ENCODE measurements at regions of chr2 and their contacts with region 1.

Region 1: DNA sequence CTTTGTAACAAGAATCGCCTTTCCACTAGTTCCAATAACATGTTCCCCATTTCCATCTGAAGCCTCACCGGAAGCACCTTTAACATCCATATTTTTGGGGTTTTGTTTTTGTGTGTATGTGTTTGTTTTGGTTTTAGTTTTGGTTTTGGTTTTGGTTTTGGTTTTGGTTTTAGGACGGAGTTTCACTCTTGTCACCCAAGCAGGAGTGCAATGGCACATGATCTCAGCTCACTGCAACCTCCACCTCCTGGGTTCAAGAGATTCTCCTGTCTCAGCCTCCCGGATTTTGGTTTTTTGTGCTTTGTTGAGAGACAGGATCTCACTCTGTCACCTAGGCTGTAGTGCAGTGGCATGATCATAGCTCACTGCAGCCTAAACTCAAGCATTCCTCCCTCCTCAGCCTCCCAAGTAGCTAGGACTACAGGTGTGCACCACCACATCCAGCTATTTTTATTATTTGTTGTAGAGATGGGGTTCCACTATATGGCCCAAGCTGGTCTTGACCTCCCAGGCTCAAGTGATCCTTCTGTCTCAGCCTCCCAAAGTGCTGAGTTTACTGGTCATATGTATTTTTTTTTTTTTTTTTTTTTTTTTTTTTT is 36.3 kb downstream of the TGOLN2 start:
- DNase-seq: no peak
- H3K4me3 ChIP-seq: no peak overlapping the region
- H3K27ac ChIP-seq: peak overlapping the region in 1 of 5 donors; percentile 38
- H3K4me1 ChIP-seq: peaks cover 0 to 11% (median 0%) of the 10 kb centered on the region in 4 donors
- H3K27me3 ChIP-seq: no peaks in the 10 kb centered on the region
- CTCF ChIP-seq: no peak
- EP300 ChIP-seq: no peak
- POLR2A ChIP-seq: no peak

Region 2: GRCh38 chr2:85066874-85067351 is 224.6 kb before region 1 on chr2:
- intact Hi-C with region 1: loop called (anchors 5 kb)
- DNase-seq: peak; percentile 67 to 90
- H3K4me3 ChIP-seq: peak overlapping the region; percentile 16 to 36 (median 28)
- H3K27ac ChIP-seq: peak overlapping the region in 1 of 5 donors; percentile 2
- H3K4me1 ChIP-seq: peaks cover 0 to 11% (median 6%) of the 10 kb centered on the region in 4 donors
- H3K27me3 ChIP-seq: peaks cover 0 to 4% (median 0%) of the 10 kb centered on the region in 3 donors
- CTCF ChIP-seq: peak in 5 of 7 experiments; percentile 63 to 79 (median 66)
- EP300 ChIP-seq: no peak
- POLR2A ChIP-seq: no peak

Region 3: GRCh38 chr2:85134889-85135659 is 156.4 kb before region 1 on chr2:
- intact Hi-C with region 1: loop called (anchors 5 kb)
- DNase-seq: peak in 1 of 2 donors; percentile 43
- H3K4me3 ChIP-seq: peak overlapping the region; percentile 48 to 86 (median 74)
- H3K27ac ChIP-seq: peak overlapping the region in 3 of 5 donors; percentile 73 to 85 (median 84)
- H3K4me1 ChIP-seq: peaks cover 10 to 70% (median 43%) of the 10 kb centered on the region in 4 donors
- H3K27me3 ChIP-seq: peaks cover 0 to 40% (median 34%) of the 10 kb centered on the region in 3 donors
- CTCF ChIP-seq: no peak
- EP300 ChIP-seq: no peak
- POLR2A ChIP-seq: no peak